MCF 10A (cell line): ENCODE measurements at regions of chr17 and their contacts with region 1.

Region 1: DNA sequence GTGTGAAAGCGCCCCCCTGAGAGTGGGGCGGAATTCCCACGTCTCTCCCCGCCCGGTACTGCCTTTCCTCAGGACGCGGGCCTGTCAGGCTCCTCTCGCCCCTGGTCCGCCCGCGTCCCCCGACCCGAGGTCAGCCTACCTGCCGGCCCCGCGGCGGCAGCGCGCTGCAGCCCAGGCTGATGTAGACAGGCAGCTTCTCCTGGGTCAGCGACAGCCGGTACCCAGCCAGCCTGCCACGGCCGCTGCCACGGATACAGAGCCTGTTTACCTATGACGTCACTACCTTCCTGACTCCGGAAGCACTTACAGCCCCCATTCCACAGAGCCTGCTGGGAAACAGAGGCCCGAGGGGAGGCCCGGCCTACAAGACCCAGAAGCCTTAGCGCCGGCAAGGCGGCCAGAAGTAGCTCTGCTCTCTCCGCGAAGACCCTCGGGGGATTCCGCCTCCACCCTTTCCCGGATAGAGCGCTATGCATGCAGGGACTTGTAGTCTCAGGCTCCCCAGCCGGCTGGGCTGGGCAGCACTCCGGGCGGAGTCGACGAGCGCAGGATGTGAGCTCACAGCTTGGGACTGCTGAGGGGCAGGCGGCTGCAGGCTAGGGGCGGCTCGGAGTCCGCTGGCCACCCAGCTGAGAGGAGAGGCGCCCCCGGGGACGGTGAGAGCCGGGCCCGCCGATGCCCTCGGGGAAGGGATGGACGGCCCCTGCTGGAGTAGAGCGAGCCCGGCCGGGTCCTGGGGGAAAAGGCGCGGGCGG is at the starts of genes IFT20 and TNFAIP1:
- DNase-seq: peak; percentile 99
- H3K4me3 Mint-ChIP-seq: peak within 1 kb of the TSS; percentile 96
- H3K27ac Mint-ChIP-seq: peak within 1 kb of the TSS; percentile 97
- H3K4me1 Mint-ChIP-seq: peaks cover 41% of the 10 kb centered on the region
- H3K27me3 Mint-ChIP-seq: no peaks in the 10 kb centered on the region
- CTCF ChIP-seq: no peak
- total RNA-seq, gene IFT20: 29.3 and 38.3 TPM in 2 replicates
- total RNA-seq, gene TNFAIP1: 61.7 and 65.0 TPM in 2 replicates

Region 2: GRCh38 chr17:28193241-28193640 is 142.1 kb before region 1 on chr17:
- CTCF ChIA-PET with region 1: no interaction called
- POLR2A ChIA-PET with region 1: no interaction called
- intact Hi-C with region 1: no loop called
- DNase-seq: no peak
- H3K4me3 Mint-ChIP-seq: no peak overlapping the region
- H3K27ac Mint-ChIP-seq: peak overlapping the region; percentile 78
- H3K4me1 Mint-ChIP-seq: no peaks in the 10 kb centered on the region
- H3K27me3 Mint-ChIP-seq: no peaks in the 10 kb centered on the region
- CTCF ChIP-seq: no peak

Region 3: GRCh38 chr17:28240991-28241340 is 94.4 kb before region 1 on chr17:
- CTCF ChIA-PET with region 1: interaction called, 10 read pairs
- POLR2A ChIA-PET with region 1: interaction called, 28 read pairs
- intact Hi-C with region 1: no loop called
- DNase-seq: no peak
- H3K4me3 Mint-ChIP-seq: no peak overlapping the region
- H3K27ac Mint-ChIP-seq: no peak overlapping the region
- H3K4me1 Mint-ChIP-seq: no peaks in the 10 kb centered on the region
- H3K27me3 Mint-ChIP-seq: peaks cover 6% of the 10 kb centered on the region
- CTCF ChIP-seq: no peak

Region 4: GRCh38 chr17:28282596-28282995 is 52.8 kb before region 1 on chr17:
- CTCF ChIA-PET with region 1: interaction called, 3 read pairs
- POLR2A ChIA-PET with region 1: interaction called, 29 read pairs
- intact Hi-C with region 1: no loop called
- DNase-seq: peak; percentile 92
- H3K4me3 Mint-ChIP-seq: peak overlapping the region; percentile 17
- H3K27ac Mint-ChIP-seq: peak overlapping the region; percentile 90
- H3K4me1 Mint-ChIP-seq: peaks cover 28% of the 10 kb centered on the region
- H3K27me3 Mint-ChIP-seq: no peaks in the 10 kb centered on the region
- CTCF ChIP-seq: no peak

Region 5: DNA sequence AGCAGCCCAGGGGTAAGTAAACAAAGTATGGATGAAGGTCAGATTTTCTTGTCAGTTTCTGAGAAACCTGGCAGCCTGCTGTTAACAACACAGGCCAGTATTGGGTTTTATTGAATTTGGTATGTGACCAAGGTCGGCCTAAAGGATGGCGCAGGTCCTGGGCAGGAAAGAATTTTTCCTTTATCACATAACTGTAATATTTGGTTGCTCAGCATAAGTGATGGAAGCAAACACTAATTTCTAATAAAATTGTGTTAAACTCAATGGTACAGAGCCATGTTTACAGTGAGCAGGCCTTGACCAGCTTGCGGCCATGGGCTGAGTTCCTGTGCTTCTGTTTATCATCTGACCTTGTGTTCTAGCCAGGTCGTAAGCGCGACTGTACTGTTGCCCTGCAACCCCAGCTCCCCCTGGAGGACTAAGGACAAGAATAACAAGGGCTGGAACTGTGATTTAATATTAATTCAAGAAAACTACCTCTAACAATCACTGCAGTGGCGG is 11.4 kb after region 1 on chr17:
- CTCF ChIA-PET with region 1: interaction called, 7 read pairs
- POLR2A ChIA-PET with region 1: interaction called, 85 read pairs
- intact Hi-C with region 1: no loop called
- DNase-seq: no peak
- H3K4me3 Mint-ChIP-seq: no peak overlapping the region
- H3K27ac Mint-ChIP-seq: peak overlapping the region; percentile 59
- H3K4me1 Mint-ChIP-seq: peaks cover 12% of the 10 kb centered on the region
- H3K27me3 Mint-ChIP-seq: no peaks in the 10 kb centered on the region
- CTCF ChIP-seq: no peak

Region 6: DNA sequence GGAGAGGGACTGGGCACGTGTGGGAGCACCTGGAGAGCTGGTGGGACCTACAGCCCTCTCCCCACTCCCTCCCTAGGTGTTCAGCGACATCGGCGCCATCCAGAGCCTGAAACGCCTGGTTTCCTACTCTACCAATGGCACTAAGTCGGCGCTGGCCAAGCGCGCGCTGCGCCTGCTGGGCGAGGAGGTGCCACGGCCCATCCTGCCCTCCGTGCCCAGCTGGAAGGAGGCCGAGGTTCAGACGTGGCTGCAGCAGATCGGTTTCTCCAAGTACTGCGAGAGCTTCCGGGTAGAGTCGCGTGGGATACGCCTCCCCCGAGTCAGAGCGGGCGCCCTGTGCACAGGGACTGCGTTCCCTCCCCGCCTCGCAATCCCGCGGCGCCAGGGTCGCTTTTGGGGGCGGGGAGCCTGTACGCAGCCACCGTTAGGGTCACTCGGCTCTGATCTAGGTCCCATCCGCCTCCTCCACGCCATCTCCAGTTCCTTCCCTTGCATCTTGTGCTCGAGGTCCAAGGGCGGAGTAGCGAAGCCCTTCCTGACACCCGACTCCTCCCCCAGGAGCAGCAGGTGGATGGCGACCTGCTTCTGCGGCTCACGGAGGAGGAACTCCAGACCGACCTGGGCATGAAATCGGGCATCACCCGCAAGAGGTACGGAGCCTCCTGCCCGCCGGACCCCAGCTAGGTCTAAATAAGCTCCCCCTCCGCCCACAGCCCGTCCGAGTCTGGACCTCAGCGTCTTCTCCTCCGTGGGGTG is 49.1 kb after region 1 on chr17:
- CTCF ChIA-PET with region 1: no interaction called
- POLR2A ChIA-PET with region 1: interaction called, 21 read pairs
- intact Hi-C with region 1: no loop called
- DNase-seq: no peak
- H3K4me3 Mint-ChIP-seq: no peak overlapping the region
- H3K27ac Mint-ChIP-seq: no peak overlapping the region
- H3K4me1 Mint-ChIP-seq: peaks cover 13% of the 10 kb centered on the region
- H3K27me3 Mint-ChIP-seq: no peaks in the 10 kb centered on the region
- CTCF ChIP-seq: no peak

Region 7: DNA sequence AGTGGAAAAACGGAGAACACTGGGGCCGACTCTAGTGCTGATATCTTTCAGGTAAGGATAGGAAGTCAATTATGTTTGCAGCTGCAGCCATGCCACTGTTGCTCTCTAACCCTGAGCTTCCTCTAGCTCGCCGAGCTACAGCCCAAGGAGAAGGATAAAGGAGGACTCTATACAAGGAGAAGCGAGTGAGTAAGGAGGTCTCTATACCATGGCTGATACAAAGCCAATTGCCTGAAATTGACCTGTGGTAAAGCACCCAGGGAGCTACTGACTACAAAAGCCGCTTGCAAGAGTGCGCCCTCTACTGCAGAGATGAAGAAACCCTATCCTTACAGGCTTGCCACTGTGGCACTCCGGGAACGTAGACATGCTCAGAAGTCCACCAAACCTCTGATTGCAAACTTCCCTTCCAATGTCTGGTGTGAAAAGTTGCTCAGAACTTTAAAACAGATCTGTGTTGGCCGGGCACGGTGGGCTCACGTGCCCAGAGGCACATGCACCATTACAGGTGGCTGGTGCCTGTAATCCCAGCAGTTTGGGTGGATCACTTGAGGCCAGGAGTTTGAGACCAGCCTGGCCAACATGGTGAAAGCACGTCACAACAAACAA is 81.4 kb after region 1 on chr17:
- CTCF ChIA-PET with region 1: interaction called, 10 read pairs
- POLR2A ChIA-PET with region 1: interaction called, 6 read pairs
- intact Hi-C with region 1: loop called (anchors 5 kb)
- DNase-seq: peak; percentile 76
- H3K4me3 Mint-ChIP-seq: no peak overlapping the region
- H3K27ac Mint-ChIP-seq: no peak overlapping the region
- H3K4me1 Mint-ChIP-seq: peaks cover 7% of the 10 kb centered on the region
- H3K27me3 Mint-ChIP-seq: no peaks in the 10 kb centered on the region
- CTCF ChIP-seq: peak; percentile 78

Region 8: GRCh38 chr17:28484296-28484695 is 148.9 kb after region 1 on chr17:
- CTCF ChIA-PET with region 1: no interaction called
- POLR2A ChIA-PET with region 1: no interaction called
- intact Hi-C with region 1: no loop called
- DNase-seq: no peak
- H3K4me3 Mint-ChIP-seq: no peak overlapping the region
- H3K27ac Mint-ChIP-seq: no peak overlapping the region
- H3K4me1 Mint-ChIP-seq: no peaks in the 10 kb centered on the region
- H3K27me3 Mint-ChIP-seq: peaks cover 15% of the 10 kb centered on the region
- CTCF ChIP-seq: no peak

Region 9: GRCh38 chr17:28552246-28552999 is 217.0 kb after region 1 on chr17 and contains the start of gene UNC119:
- CTCF ChIA-PET with region 1: no interaction called
- POLR2A ChIA-PET with region 1: interaction called, 4 read pairs
- intact Hi-C with region 1: loop called (anchors 10 kb)
- DNase-seq: peak; percentile 74
- H3K4me3 Mint-ChIP-seq: peak within 1 kb of the TSS; percentile 75
- H3K27ac Mint-ChIP-seq: no peak within 1 kb of the TSS
- H3K4me1 Mint-ChIP-seq: no peaks in the 10 kb centered on the region
- H3K27me3 Mint-ChIP-seq: no peaks in the 10 kb centered on the region
- CTCF ChIP-seq: no peak
- total RNA-seq, gene UNC119: 12.5 and 13.7 TPM in 2 replicates